RWPE1 (cell line): ENCODE measurements at regions of chr11 and their contacts with region 1.

Region 1: GRCh38 chr11:118928108-118928870 is 2.6 kb upstream of the BCL9L start:
- DNase-seq: peak; percentile 98
- H3K27ac ChIP-seq: peak overlapping the region; percentile 100
- CTCF ChIP-seq: peak; percentile 92

Region 2: DNA sequence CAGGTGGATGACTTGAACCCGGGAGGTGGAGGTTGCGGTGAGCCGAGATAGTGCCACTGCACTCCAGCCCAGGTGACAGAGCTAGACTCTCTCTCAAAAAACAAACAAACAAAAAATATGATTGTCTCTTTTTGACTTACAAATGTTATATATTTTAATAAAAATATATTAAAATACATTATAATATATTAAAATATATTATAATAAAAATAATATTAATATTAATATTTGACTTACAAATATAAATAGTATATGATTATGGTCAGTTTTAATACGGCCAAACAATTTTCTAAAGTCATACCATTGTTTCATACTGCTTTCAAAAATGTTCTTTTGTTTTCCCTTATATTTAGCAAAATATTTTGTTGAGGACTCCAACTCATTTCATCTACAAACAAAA is 110.2 kb before region 1 on chr11:
- CTCF ChIA-PET with region 1: no interaction called
- POLR2A ChIA-PET with region 1: no interaction called
- DNase-seq: no peak
- H3K27ac ChIP-seq: no peak overlapping the region
- CTCF ChIP-seq: no peak

Region 3: DNA sequence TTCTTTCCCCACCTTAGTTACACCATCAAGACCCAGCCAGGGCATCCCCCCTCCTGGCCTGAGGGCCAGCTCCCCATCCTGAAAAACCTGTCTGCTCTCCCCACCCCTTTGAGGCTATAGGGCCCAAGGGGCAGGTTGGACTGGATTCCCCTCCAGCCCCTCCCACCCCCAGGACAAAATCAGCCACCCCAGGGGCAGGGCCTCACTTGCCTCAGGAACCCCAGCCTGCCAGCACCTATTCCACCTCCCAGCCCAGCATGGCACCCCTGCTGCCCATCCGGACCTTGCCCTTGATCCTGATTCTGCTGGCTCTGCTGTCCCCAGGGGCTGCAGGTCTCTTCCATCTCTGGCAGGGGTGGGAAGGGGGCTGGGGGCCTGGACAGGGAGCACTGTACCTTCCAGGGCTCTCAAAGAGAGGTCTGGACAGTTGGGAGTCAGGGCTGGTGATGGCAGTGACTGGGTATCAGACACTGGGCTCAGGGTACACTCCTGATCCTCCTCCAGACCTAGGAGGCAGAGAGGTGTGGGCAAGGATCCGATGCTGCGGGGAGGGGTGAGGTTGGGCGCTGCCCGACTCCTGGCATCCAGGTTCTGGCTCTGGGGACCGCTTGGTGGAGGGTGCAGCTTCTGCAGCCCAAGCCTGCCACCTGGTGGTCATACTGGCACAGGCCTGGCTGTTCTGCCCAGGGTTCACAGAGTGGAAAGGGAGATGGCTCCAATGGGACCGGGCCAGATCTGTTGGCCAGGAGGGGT is 28.0 kb after region 1 on chr11 and contains the start of gene UPK2:
- CTCF ChIA-PET with region 1: interaction called, 10 read pairs
- POLR2A ChIA-PET with region 1: interaction called, 3 read pairs
- DNase-seq: peak; percentile 93
- H3K27ac ChIP-seq: no peak within 1 kb of the TSS
- CTCF ChIP-seq: peak; percentile 91